GM23248 (cell line): ENCODE measurements at regions of chr3 and their contacts with region 1.

Region 1: GRCh38 chr3:129824926-129825541 is 68.5 kb downstream of the TMCC1 start:
- DNase-seq: peak; percentile 65
- H3K4me3 ChIP-seq: no peak overlapping the region
- H3K27ac ChIP-seq: no peak overlapping the region
- H3K4me1 ChIP-seq: peaks cover 21% of the 10 kb centered on the region
- H3K27me3 ChIP-seq: no peaks in the 10 kb centered on the region

Region 2: GRCh38 chr3:129263161-129264070 is 561.6 kb before region 1 on chr3:
- in situ Hi-C with region 1: no loop called
- DNase-seq: no peak
- H3K4me3 ChIP-seq: no peak overlapping the region
- H3K27ac ChIP-seq: no peak overlapping the region
- H3K4me1 ChIP-seq: peaks cover 3% of the 10 kb centered on the region; the same call in 1 of the 2 replicates
- H3K27me3 ChIP-seq: no peaks in the 10 kb centered on the region

Region 3: GRCh38 chr3:129507181-129507831 is 317.7 kb before region 1 on chr3:
- in situ Hi-C with region 1: no loop called
- DNase-seq: no peak
- H3K4me3 ChIP-seq: no peak overlapping the region
- H3K27ac ChIP-seq: no peak overlapping the region
- H3K4me1 ChIP-seq: no peaks in the 10 kb centered on the region
- H3K27me3 ChIP-seq: no peaks in the 10 kb centered on the region

Region 4: GRCh38 chr3:129650256-129650872 is 174.7 kb before region 1 on chr3:
- in situ Hi-C with region 1: loop called (anchors 10 kb)
- DNase-seq: peak; percentile 93
- H3K4me3 ChIP-seq: peak overlapping the region; percentile 10; the same call in 1 of the 2 replicates
- H3K27ac ChIP-seq: no peak overlapping the region
- H3K4me1 ChIP-seq: peaks cover 54% of the 10 kb centered on the region
- H3K27me3 ChIP-seq: no peaks in the 10 kb centered on the region